ENCODE measurements at regions of chr12 and their contacts with region 1.

Region 1: GRCh38 chr12:93449277-93449676 is 7.5 kb upstream of the UBE2N start:
- DNase-seq: no peak
- ATAC-seq: peak; percentile 99
- H3K4me3 Mint-ChIP-seq: no peak overlapping the region
- H3K27ac Mint-ChIP-seq: peak overlapping the region; percentile 54
- H3K4me1 Mint-ChIP-seq: peaks cover 19% of the 10 kb centered on the region
- H3K27me3 Mint-ChIP-seq: no peaks in the 10 kb centered on the region
- CTCF ChIP-seq: no peak

Region 2: DNA sequence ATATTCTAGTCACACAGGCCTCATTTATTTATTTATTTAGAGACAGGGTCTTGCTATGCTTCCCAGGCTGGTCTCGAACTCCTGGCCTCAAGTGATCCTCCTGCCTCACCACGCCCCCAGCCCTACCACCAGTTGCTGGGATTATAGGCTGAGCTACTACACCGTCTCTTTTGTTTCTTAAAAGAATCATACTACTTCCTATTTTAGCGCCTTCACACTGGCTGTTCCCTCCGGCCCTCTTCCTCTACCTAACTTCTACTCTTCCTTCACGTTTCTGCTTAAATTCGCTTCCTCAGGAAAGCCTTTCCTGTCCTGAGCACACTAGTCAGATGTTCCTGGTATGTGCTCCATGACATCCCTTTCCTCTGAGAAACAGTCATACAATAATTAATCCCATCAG is 11.6 kb after region 1 on chr12:
- CTCF ChIA-PET with region 1: no interaction called
- POLR2A ChIA-PET with region 1: no interaction called
- intact Hi-C with region 1: loop called (anchors 1 kb)
- DNase-seq: no peak
- ATAC-seq: no peak
- H3K4me3 Mint-ChIP-seq: no peak overlapping the region
- H3K27ac Mint-ChIP-seq: no peak overlapping the region
- H3K4me1 Mint-ChIP-seq: peaks cover 2% of the 10 kb centered on the region
- H3K27me3 Mint-ChIP-seq: no peaks in the 10 kb centered on the region
- CTCF ChIP-seq: no peak

Region 3: DNA sequence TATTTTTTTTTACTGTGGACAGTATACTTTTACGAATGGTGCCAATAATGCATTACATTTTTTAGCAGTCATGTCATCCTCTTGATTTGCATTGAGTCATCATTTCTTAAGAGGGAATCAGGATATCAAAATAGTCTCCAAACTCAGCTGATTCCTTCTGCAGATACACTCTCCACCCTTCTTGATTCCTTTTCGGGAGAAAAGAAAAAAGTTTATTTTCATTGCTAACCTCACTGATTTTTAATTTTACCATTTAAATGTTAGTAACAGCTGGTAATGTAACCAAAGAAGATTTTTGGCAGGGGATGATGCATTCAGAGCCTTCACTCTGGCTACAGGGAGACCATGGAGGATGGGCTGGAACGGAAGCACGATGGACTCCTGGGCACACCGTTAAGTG is 65.6 kb after region 1 on chr12:
- CTCF ChIA-PET with region 1: no interaction called
- POLR2A ChIA-PET with region 1: no interaction called
- intact Hi-C with region 1: no loop called
- DNase-seq: no peak
- ATAC-seq: no peak
- H3K4me3 Mint-ChIP-seq: no peak overlapping the region
- H3K27ac Mint-ChIP-seq: no peak overlapping the region
- H3K4me1 Mint-ChIP-seq: no peaks in the 10 kb centered on the region
- H3K27me3 Mint-ChIP-seq: no peaks in the 10 kb centered on the region
- CTCF ChIP-seq: no peak

Region 4: GRCh38 chr12:93668919-93669418 is 219.7 kb after region 1 on chr12:
- CTCF ChIA-PET with region 1: no interaction called
- POLR2A ChIA-PET with region 1: no interaction called
- intact Hi-C with region 1: no loop called
- DNase-seq: no peak
- ATAC-seq: peak; percentile 40
- H3K4me3 Mint-ChIP-seq: no peak overlapping the region
- H3K27ac Mint-ChIP-seq: no peak overlapping the region
- H3K4me1 Mint-ChIP-seq: no peaks in the 10 kb centered on the region
- H3K27me3 Mint-ChIP-seq: peaks cover 8% of the 10 kb centered on the region
- CTCF ChIP-seq: no peak

Region 5: DNA sequence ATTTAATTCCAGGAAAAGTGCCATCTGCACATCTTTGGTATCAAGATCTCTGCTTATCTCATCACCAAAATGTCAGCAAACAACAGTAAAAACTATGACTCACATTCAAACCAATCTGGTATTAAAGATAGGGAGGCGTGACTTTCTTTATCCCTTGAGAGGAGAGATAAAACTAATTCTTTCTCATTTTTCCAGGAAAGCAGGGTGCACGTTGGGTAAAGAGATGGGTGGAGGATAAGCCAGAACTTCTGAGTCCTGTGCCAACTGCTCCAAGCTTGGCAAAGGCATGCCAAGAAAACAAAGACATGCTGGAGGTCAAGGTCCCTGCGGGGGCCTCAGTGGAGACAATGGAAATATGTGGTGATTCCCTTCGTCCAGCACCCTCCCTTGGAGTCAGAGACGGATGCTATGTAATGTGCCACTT is 473.3 kb after region 1 on chr12:
- CTCF ChIA-PET with region 1: no interaction called
- POLR2A ChIA-PET with region 1: no interaction called
- intact Hi-C with region 1: no loop called
- DNase-seq: no peak
- ATAC-seq: no peak
- H3K4me3 Mint-ChIP-seq: no peak overlapping the region
- H3K27ac Mint-ChIP-seq: no peak overlapping the region
- H3K4me1 Mint-ChIP-seq: no peaks in the 10 kb centered on the region
- H3K27me3 Mint-ChIP-seq: no peaks in the 10 kb centered on the region
- CTCF ChIP-seq: no peak

Measured in activated B cell treated with CpG ODN at 0.5 μM for 24 hours (primary cell).